ENCODE measurements at regions of chr15 and their contacts with region 1.

Region 1: GRCh38 chr15:29390051-29390450 is 120.4 kb upstream of the NSMCE3 start:
- DNase-seq: no peak
- ATAC-seq: no peak
- H3K4me3 Mint-ChIP-seq: no peak overlapping the region
- H3K27ac Mint-ChIP-seq: no peak overlapping the region
- H3K4me1 Mint-ChIP-seq: no peaks in the 10 kb centered on the region
- H3K27me3 Mint-ChIP-seq: peaks cover 10% of the 10 kb centered on the region

Region 2: DNA sequence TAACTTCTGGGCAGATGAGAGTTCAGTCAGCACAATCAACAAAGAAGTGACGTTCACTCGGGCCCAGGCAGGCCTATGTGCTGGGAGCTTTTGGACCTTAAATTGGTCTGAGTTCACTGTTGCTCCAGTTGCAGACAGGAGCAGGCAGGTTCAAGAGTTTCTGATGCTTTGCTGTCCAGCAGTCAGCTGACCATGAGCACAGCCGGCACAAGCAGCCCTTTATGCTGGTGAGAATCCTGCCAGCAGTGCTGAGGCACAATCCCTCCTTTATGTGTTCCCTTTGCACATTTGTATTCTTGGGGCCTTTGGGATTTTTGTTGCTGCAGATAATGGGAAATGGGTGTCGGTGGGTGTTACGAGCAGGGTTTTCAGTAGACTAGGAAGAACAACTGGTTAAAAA is 611.6 kb after region 1 on chr15:
- CTCF ChIA-PET with region 1: no interaction called
- POLR2A ChIA-PET with region 1: no interaction called
- intact Hi-C with region 1: loop called in 1 of 2 experiments (anchors 5 kb)
- DNase-seq: no peak
- ATAC-seq: no peak
- H3K4me3 Mint-ChIP-seq: no peak overlapping the region
- H3K27ac Mint-ChIP-seq: no peak overlapping the region
- H3K4me1 Mint-ChIP-seq: no peaks in the 10 kb centered on the region
- H3K27me3 Mint-ChIP-seq: peaks cover 2% of the 10 kb centered on the region